ENCODE measurements at regions of chr5 and their contacts with region 1.

Region 1: GRCh38 chr5:72307968-72308852 is 11.8 kb downstream of the MRPS27 start:
- DNase-seq: peak; percentile 91 to 97 (median 95)
- ATAC-seq: peak; percentile 98
- H3K4me3 ChIP-seq: peak overlapping the region; percentile 93
- H3K4me3 Mint-ChIP-seq: peak overlapping the region; percentile 78 to 94 (median 92)
- H3K27ac ChIP-seq: peak overlapping the region; percentile 95
- H3K27ac Mint-ChIP-seq: peak overlapping the region; percentile 84 to 97 (median 91)
- H3K4me1 ChIP-seq: peaks cover 3 to 12% of the 10 kb centered on the region in 2 donors
- H3K4me1 Mint-ChIP-seq: peaks cover 9 to 38% (median 29%) of the 10 kb centered on the region in 7 donors
- H3K27me3 ChIP-seq: no peaks in the 10 kb centered on the region
- H3K27me3 Mint-ChIP-seq: no peaks in the 10 kb centered on the region

Region 2: GRCh38 chr5:71475788-71476384 is 832.3 kb before region 1 on chr5:
- CTCF ChIA-PET with region 1: no interaction called
- POLR2A ChIA-PET with region 1: interaction called, 3 read pairs
- intact Hi-C with region 1: loop called in 1 of 2 experiments (anchors 1 kb)
- DNase-seq: peak in 3 of 9 donors; percentile 5 to 15 (median 5)
- ATAC-seq: no peak
- H3K4me3 ChIP-seq: no peak overlapping the region
- H3K4me3 Mint-ChIP-seq: no peak overlapping the region
- H3K27ac ChIP-seq: no peak overlapping the region
- H3K27ac Mint-ChIP-seq: peak overlapping the region in 1 of 9 donors; percentile 60
- H3K4me1 ChIP-seq: no peaks in the 10 kb centered on the region
- H3K4me1 Mint-ChIP-seq: peaks cover 0 to 7% (median 0%) of the 10 kb centered on the region in 7 donors
- H3K27me3 ChIP-seq: no peaks in the 10 kb centered on the region
- H3K27me3 Mint-ChIP-seq: no peaks in the 10 kb centered on the region

Region 3: GRCh38 chr5:71782771-71783770 is 525.1 kb before region 1 on chr5:
- CTCF ChIA-PET with region 1: no interaction called
- POLR2A ChIA-PET with region 1: no interaction called
- intact Hi-C with region 1: loop called in 1 of 2 experiments (anchors 5 kb)
- DNase-seq: peak in 5 of 9 donors; percentile 7 to 44 (median 9)
- ATAC-seq: peak; percentile 71
- H3K4me3 ChIP-seq: peak overlapping the region; percentile 19
- H3K4me3 Mint-ChIP-seq: peak overlapping the region in 9 of 10 donors; percentile 11 to 71 (median 57)
- H3K27ac ChIP-seq: no peak overlapping the region
- H3K27ac Mint-ChIP-seq: peak overlapping the region in 2 of 9 donors; percentile 25 to 38
- H3K4me1 ChIP-seq: peaks cover 0 to 7% of the 10 kb centered on the region in 2 donors
- H3K4me1 Mint-ChIP-seq: peaks cover 6 to 23% (median 15%) of the 10 kb centered on the region in 7 donors
- H3K27me3 ChIP-seq: no peaks in the 10 kb centered on the region
- H3K27me3 Mint-ChIP-seq: peaks cover 8 to 17% (median 9%) of the 10 kb centered on the region in 5 donors

Region 4: GRCh38 chr5:71887680-71888079 is 420.5 kb before region 1 on chr5:
- CTCF ChIA-PET with region 1: no interaction called
- POLR2A ChIA-PET with region 1: no interaction called
- intact Hi-C with region 1: no loop called
- DNase-seq: peak in 7 of 9 donors; percentile 5 to 47 (median 36)
- ATAC-seq: peak; percentile 90
- H3K4me3 ChIP-seq: no peak overlapping the region
- H3K4me3 Mint-ChIP-seq: peak overlapping the region in 5 of 10 donors; percentile 14 to 38 (median 29)
- H3K27ac ChIP-seq: no peak overlapping the region
- H3K27ac Mint-ChIP-seq: peak overlapping the region in 2 of 9 donors; percentile 21 to 43
- H3K4me1 ChIP-seq: no peaks in the 10 kb centered on the region
- H3K4me1 Mint-ChIP-seq: peaks cover 0 to 8% (median 0%) of the 10 kb centered on the region in 7 donors
- H3K27me3 ChIP-seq: no peaks in the 10 kb centered on the region
- H3K27me3 Mint-ChIP-seq: peaks cover 7 to 32% (median 20%) of the 10 kb centered on the region in 5 donors

Region 5: GRCh38 chr5:72010430-72010829 is 297.8 kb before region 1 on chr5:
- CTCF ChIA-PET with region 1: no interaction called
- POLR2A ChIA-PET with region 1: no interaction called
- intact Hi-C with region 1: no loop called
- DNase-seq: no peak
- ATAC-seq: no peak
- H3K4me3 ChIP-seq: no peak overlapping the region
- H3K4me3 Mint-ChIP-seq: no peak overlapping the region
- H3K27ac ChIP-seq: no peak overlapping the region
- H3K27ac Mint-ChIP-seq: no peak overlapping the region
- H3K4me1 ChIP-seq: no peaks in the 10 kb centered on the region
- H3K4me1 Mint-ChIP-seq: no peaks in the 10 kb centered on the region
- H3K27me3 ChIP-seq: peaks cover 0 to 3% of the 10 kb centered on the region in 2 donors
- H3K27me3 Mint-ChIP-seq: peaks cover 8 to 40% (median 25%) of the 10 kb centered on the region in 5 donors

Region 6: DNA sequence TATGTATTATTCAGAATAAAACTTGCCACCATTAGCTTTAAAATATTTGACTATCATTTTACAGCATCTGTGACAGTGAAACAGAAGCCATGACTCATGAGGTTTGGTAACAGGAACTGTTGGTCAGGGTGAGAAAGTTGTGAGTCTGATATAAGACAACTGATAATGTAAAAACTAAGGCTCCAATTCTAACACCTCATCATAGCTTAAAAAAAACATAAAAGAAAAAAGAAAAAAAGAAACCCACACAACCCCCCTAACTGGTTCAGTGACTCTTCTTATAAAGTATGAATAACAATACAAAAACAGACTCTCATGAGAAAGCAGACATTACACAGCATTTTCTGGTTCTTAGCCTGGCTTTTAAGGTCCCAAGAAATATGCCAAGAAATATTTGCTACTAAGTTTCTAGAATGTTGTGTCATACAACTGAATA is 73.9 kb before region 1 on chr5:
- CTCF ChIA-PET with region 1: no interaction called
- POLR2A ChIA-PET with region 1: no interaction called
- intact Hi-C with region 1: loop called in 1 of 2 experiments (anchors 2 kb)
- DNase-seq: peak in 1 of 9 donors; percentile 1
- ATAC-seq: peak; percentile 87
- H3K4me3 ChIP-seq: no peak overlapping the region
- H3K4me3 Mint-ChIP-seq: peak overlapping the region in 2 of 10 donors; percentile 1 to 5
- H3K27ac ChIP-seq: no peak overlapping the region
- H3K27ac Mint-ChIP-seq: peak overlapping the region in 1 of 9 donors; percentile 23
- H3K4me1 ChIP-seq: peaks cover 8 to 32% of the 10 kb centered on the region in 2 donors
- H3K4me1 Mint-ChIP-seq: peaks cover 34 to 61% (median 49%) of the 10 kb centered on the region in 7 donors
- H3K27me3 ChIP-seq: no peaks in the 10 kb centered on the region
- H3K27me3 Mint-ChIP-seq: peaks cover 0 to 16% (median 0%) of the 10 kb centered on the region in 5 donors

Region 7: GRCh38 chr5:72244862-72245371 is 63.3 kb before region 1 on chr5:
- CTCF ChIA-PET with region 1: no interaction called
- POLR2A ChIA-PET with region 1: no interaction called
- intact Hi-C with region 1: no loop called
- DNase-seq: no peak
- ATAC-seq: peak; percentile 52
- H3K4me3 ChIP-seq: no peak overlapping the region
- H3K4me3 Mint-ChIP-seq: no peak overlapping the region
- H3K27ac ChIP-seq: no peak overlapping the region
- H3K27ac Mint-ChIP-seq: peak overlapping the region in 1 of 9 donors; percentile 4
- H3K4me1 ChIP-seq: no peaks in the 10 kb centered on the region
- H3K4me1 Mint-ChIP-seq: peaks cover 11 to 50% (median 24%) of the 10 kb centered on the region in 7 donors
- H3K27me3 ChIP-seq: no peaks in the 10 kb centered on the region
- H3K27me3 Mint-ChIP-seq: no peaks in the 10 kb centered on the region

Region 8: GRCh38 chr5:72644296-72644695 is 336.1 kb after region 1 on chr5:
- CTCF ChIA-PET with region 1: no interaction called
- POLR2A ChIA-PET with region 1: no interaction called
- intact Hi-C with region 1: no loop called
- DNase-seq: no peak
- ATAC-seq: no peak
- H3K4me3 ChIP-seq: no peak overlapping the region
- H3K4me3 Mint-ChIP-seq: no peak overlapping the region
- H3K27ac ChIP-seq: no peak overlapping the region
- H3K27ac Mint-ChIP-seq: no peak overlapping the region
- H3K4me1 ChIP-seq: no peaks in the 10 kb centered on the region
- H3K4me1 Mint-ChIP-seq: no peaks in the 10 kb centered on the region
- H3K27me3 ChIP-seq: no peaks in the 10 kb centered on the region
- H3K27me3 Mint-ChIP-seq: peaks cover 0 to 6% (median 1%) of the 10 kb centered on the region in 5 donors

Region 9: DNA sequence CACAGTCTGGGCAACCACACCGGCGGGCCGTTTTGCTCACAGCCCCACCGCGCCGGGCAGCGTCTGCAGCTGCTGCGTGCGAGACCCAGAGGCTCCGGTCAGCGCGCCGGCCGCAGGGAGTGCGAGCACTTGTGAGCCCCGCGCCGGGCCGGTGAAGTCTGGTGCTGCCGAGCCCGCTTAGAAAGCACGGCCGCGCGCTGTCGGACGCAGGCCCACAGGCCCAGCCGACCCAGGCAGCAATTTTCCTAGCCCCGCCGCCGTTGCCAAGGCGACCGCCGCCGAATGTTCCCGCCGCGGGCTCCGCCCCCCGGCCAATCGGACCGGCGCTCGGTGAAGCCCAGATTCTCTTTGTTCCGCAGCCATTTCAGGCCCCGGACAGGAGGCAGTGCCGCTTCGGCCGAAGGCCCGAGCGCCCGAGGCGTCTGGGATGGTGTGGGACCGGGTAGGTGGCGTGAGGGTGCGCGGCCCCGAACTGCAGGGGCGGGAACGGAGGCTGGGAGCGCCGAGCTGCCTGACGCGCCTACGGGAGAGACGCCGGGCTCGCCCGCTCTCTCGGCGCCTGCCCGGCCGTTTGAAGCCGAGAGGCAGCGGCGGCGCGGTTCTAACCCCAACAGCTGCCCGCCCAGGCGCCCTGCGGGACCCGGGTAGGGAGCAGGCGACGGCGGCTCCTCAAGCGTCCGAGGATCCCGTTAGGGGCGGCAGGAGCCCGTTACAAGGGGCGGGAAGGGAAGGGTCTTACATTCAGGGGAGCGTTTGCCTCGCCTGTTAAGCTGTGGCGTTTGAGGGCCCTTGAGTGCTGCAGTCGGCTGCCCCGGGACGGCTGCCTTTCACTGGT is 508.3 kb after region 1 on chr5 and contains the start of gene TNPO1:
- CTCF ChIA-PET with region 1: no interaction called
- POLR2A ChIA-PET with region 1: no interaction called
- intact Hi-C with region 1: loop called (anchors 1 to 5 kb)
- DNase-seq: peak; percentile 75 to 89 (median 84)
- ATAC-seq: peak; percentile 87
- H3K4me3 ChIP-seq: peak within 1 kb of the TSS; percentile 83
- H3K4me3 Mint-ChIP-seq: peak within 1 kb of the TSS; percentile 90 to 100 (median 98)
- H3K27ac ChIP-seq: peak within 1 kb of the TSS; percentile 93
- H3K27ac Mint-ChIP-seq: peak within 1 kb of the TSS; percentile 81 to 98 (median 94)
- H3K4me1 ChIP-seq: peaks cover 6 to 21% of the 10 kb centered on the region in 2 donors
- H3K4me1 Mint-ChIP-seq: peaks cover 14 to 32% (median 23%) of the 10 kb centered on the region in 7 donors
- H3K27me3 ChIP-seq: no peaks in the 10 kb centered on the region
- H3K27me3 Mint-ChIP-seq: peaks cover 8 to 30% (median 20%) of the 10 kb centered on the region in 5 donors
- total RNA-seq, gene TNPO1: 52.8 to 96.3 (median 82.1) TPM

Region 10: GRCh38 chr5:73498057-73499008 is 1190.1 kb after region 1 on chr5 and contains the start of gene BTF3:
- CTCF ChIA-PET with region 1: no interaction called
- POLR2A ChIA-PET with region 1: no interaction called
- intact Hi-C with region 1: loop called in 1 of 2 experiments (anchors 5 kb)
- DNase-seq: peak; percentile 83 to 94 (median 91)
- ATAC-seq: peak; percentile 96
- H3K4me3 ChIP-seq: peak within 1 kb of the TSS; percentile 81
- H3K4me3 Mint-ChIP-seq: peak within 1 kb of the TSS; percentile 92 to 99 (median 97)
- H3K27ac ChIP-seq: peak within 1 kb of the TSS; percentile 93
- H3K27ac Mint-ChIP-seq: peak within 1 kb of the TSS; percentile 97 to 100 (median 99)
- H3K4me1 ChIP-seq: peaks cover 22 to 31% of the 10 kb centered on the region in 2 donors
- H3K4me1 Mint-ChIP-seq: peaks cover 26 to 57% (median 41%) of the 10 kb centered on the region in 7 donors
- H3K27me3 ChIP-seq: peaks cover 0 to 4% of the 10 kb centered on the region in 2 donors
- H3K27me3 Mint-ChIP-seq: peaks cover 4 to 15% (median 13%) of the 10 kb centered on the region in 5 donors
- total RNA-seq, gene BTF3: 557 to 758 (median 700) TPM